Spleen (tissue), 13 donors: ENCODE measurements at regions of chr10 and their contacts with region 1.

Region 1: GRCh38 chr10:102917962-102918816 is at the start of gene CNNM2:
- DNase-seq: peak; percentile 99
- H3K4me3 ChIP-seq: peak within 1 kb of the TSS; percentile 93 to 100 (median 98)
- H3K27ac ChIP-seq: peak within 1 kb of the TSS; percentile 75 to 92 (median 88)
- H3K4me1 ChIP-seq: peaks cover 32 to 60% (median 50%) of the 10 kb centered on the region in 6 donors
- H3K27me3 ChIP-seq: peaks cover 0 to 15% (median 0%) of the 10 kb centered on the region in 7 donors
- CTCF ChIP-seq: peak in 1 of 11 experiments; percentile 26
- POLR2A ChIP-seq: no peak
- total RNA-seq, gene CNNM2: 6.8 to 9.9 (median 8.7) TPM

Region 2: DNA sequence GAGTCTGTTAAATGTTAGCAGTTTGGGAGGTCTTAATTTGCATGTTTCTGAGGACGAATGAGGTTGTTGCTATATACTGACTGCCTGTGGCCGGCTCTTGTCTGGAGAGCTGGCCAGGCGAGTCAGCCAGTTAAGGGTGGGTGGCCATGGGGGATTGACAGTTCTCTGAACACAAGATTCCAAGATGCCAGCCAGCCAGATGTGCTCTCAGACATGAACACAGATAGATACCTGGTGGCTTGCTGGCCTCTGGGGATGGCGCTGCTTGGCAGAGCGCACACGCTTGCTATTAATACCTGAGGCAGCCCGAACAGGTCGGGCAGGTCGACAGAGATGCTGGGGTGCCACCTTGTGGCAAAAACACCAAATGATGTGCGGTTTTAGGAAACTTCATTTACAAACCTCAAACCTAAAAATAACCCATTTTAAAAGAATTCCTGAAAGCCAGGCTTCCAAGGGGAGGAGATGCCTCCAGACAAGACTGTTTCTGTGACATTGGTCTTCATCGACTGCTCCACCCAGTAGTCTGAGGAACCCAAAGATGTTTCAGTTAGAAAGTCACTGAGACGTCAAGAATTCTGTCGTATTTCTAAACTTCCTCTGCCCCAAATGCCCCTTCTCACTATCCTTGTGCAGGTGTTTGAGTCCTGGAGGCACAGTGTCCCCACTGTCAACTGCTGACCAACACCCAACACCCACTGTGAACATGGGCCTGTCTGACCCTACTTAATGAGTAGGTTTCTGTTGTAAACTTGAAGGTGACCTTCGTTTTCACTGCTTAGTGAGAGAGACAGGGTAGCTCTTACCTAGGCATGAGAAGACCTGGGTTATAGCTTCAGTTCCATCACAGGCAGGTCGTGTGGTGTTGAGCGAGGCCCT is 151.5 kb after region 1 on chr10:
- intact Hi-C with region 1: loop called (anchors 5 kb)
- DNase-seq: peak; percentile 88
- H3K4me3 ChIP-seq: no peak overlapping the region
- H3K27ac ChIP-seq: peak overlapping the region in 5 of 8 donors; percentile 5 to 66 (median 34)
- H3K4me1 ChIP-seq: peaks cover 18 to 38% (median 20%) of the 10 kb centered on the region in 6 donors
- H3K27me3 ChIP-seq: no peaks in the 10 kb centered on the region
- CTCF ChIP-seq: peak; percentile 13 to 74 (median 60)
- POLR2A ChIP-seq: no peak

Region 3: GRCh38 chr10:103168486-103169311 is 250.5 kb after region 1 on chr10:
- intact Hi-C with region 1: no loop called
- DNase-seq: no peak
- H3K4me3 ChIP-seq: no peak overlapping the region
- H3K27ac ChIP-seq: peak overlapping the region in 1 of 8 donors; percentile 9
- H3K4me1 ChIP-seq: peaks cover 0 to 18% (median 4%) of the 10 kb centered on the region in 6 donors
- H3K27me3 ChIP-seq: no peaks in the 10 kb centered on the region
- CTCF ChIP-seq: no peak
- POLR2A ChIP-seq: no peak

Region 4: DNA sequence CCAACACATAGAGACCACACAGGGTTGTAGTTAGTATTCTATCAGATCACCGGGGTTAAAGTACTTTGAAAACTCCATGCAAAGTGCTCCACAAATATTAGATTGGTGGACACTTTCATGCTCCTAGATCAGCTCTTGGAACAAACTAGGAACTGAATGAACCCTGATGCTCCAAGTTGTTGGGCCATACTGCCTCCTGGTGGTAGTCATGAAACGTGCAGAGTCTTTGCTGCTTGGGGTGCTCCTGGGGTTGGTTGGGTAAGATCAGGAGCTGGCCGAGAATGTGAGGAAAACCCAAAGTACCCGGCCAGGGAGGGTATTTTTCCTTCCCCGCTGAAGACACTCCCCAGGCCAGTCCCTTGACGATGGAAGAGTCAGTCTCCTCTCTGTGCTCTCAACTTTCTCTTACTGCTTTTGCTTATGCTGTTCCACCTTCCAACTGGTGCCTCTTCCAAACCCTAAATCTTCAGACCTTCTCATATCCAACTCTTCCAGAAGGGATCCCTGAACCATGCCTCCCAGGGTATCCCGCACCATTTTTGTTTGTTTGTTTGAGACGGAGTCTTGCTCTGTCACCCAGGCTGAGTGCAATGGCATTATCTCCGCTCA is 326.6 kb after region 1 on chr10:
- intact Hi-C with region 1: loop called (anchors 2 kb)
- DNase-seq: peak; percentile 78
- H3K4me3 ChIP-seq: no peak overlapping the region
- H3K27ac ChIP-seq: no peak overlapping the region
- H3K4me1 ChIP-seq: peaks cover 0 to 35% (median 21%) of the 10 kb centered on the region in 6 donors
- H3K27me3 ChIP-seq: no peaks in the 10 kb centered on the region
- CTCF ChIP-seq: peak; percentile 79 to 92 (median 89)
- POLR2A ChIP-seq: no peak